GM12878 (cell line): ENCODE measurements at regions of chr6 and their contacts with region 1.

Region 1: GRCh38 chr6:42505377-42505702 is 53.6 kb upstream of the TRERF1 start:
- DNase-seq: no peak
- ATAC-seq: peak; percentile 36
- H3K4me3 ChIP-seq: no peak overlapping the region
- H3K27ac ChIP-seq: peak overlapping the region; percentile 54
- H3K4me1 ChIP-seq: peaks cover 52% of the 10 kb centered on the region
- H3K27me3 ChIP-seq: no peaks in the 10 kb centered on the region
- CTCF ChIP-seq: no peak
- EP300 ChIP-seq: no peak
- POLR2A ChIP-seq: no peak
- RAD21 ChIP-seq: no peak

Region 2: GRCh38 chr6:42224222-42224989 is 280.9 kb before region 1 on chr6:
- CTCF ChIA-PET with region 1: no interaction called
- POLR2A ChIA-PET with region 1: interaction called, 3 read pairs
- RAD21 ChIA-PET with region 1: interaction called, 6 read pairs
- SMC1A ChIA-PET with region 1: interaction called, 3 read pairs
- in situ Hi-C with region 1: no loop called
- intact Hi-C with region 1: loop called (anchors 2 kb)
- DNase-seq: peak; percentile 94
- ATAC-seq: peak; percentile 94
- H3K4me3 ChIP-seq: no peak overlapping the region
- H3K27ac ChIP-seq: no peak overlapping the region
- H3K4me1 ChIP-seq: no peaks in the 10 kb centered on the region; the same call in 1 of the 2 replicates
- H3K27me3 ChIP-seq: no peaks in the 10 kb centered on the region
- CTCF ChIP-seq: no peak
- EP300 ChIP-seq: peak; percentile 71 to 96
- POLR2A ChIP-seq: no peak
- RAD21 ChIP-seq: no peak

Region 3: GRCh38 chr6:42367353-42368011 is 137.9 kb before region 1 on chr6:
- CTCF ChIA-PET with region 1: interaction called, 3 read pairs
- POLR2A ChIA-PET with region 1: interaction called, 3 read pairs
- RAD21 ChIA-PET with region 1: interaction called, 22 read pairs
- SMC1A ChIA-PET with region 1: interaction called, 17 read pairs
- in situ Hi-C with region 1: no loop called
- intact Hi-C with region 1: no loop called
- DNase-seq: peak; percentile 59
- ATAC-seq: peak; percentile 92
- H3K4me3 ChIP-seq: peak overlapping the region; percentile 35; the same call in 1 of the 2 replicates
- H3K27ac ChIP-seq: peak overlapping the region; percentile 82
- H3K4me1 ChIP-seq: peaks cover 58% of the 10 kb centered on the region
- H3K27me3 ChIP-seq: no peaks in the 10 kb centered on the region
- CTCF ChIP-seq: no peak
- EP300 ChIP-seq: no peak
- POLR2A ChIP-seq: peak; percentile 52
- RAD21 ChIP-seq: no peak

Region 4: DNA sequence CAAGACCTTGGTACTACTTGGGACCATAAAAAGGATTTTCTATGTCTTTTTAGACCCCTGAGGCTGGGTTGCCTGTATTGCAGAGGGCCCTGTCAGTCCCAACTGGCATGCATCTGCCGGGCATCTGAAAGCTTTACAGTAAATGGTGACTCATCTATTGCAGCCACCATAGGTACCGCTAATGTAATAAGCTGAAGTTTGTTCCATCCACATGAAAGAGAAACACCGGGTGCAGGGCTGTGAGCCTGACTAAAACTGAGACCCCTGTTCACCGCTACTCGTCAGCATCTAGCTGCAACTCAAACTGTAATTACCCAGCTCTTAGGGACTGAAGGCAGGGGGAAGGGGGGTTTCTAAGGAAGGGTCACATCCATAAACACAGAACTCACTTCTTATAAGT is 103.2 kb before region 1 on chr6:
- CTCF ChIA-PET with region 1: no interaction called
- POLR2A ChIA-PET with region 1: interaction called, 5 read pairs
- RAD21 ChIA-PET with region 1: interaction called, 4 read pairs
- SMC1A ChIA-PET with region 1: interaction called, 7 read pairs
- in situ Hi-C with region 1: no loop called
- intact Hi-C with region 1: loop called (anchors 5 kb)
- DNase-seq: peak; percentile 74
- ATAC-seq: peak; percentile 99
- H3K4me3 ChIP-seq: no peak overlapping the region
- H3K27ac ChIP-seq: no peak overlapping the region
- H3K4me1 ChIP-seq: peaks cover 12% of the 10 kb centered on the region
- H3K27me3 ChIP-seq: no peaks in the 10 kb centered on the region
- CTCF ChIP-seq: no peak
- EP300 ChIP-seq: peak; percentile 91 to 93
- POLR2A ChIP-seq: no peak
- RAD21 ChIP-seq: peak; percentile 28; the same call in 1 of the 2 replicates

Region 5: GRCh38 chr6:42428326-42429041 is 76.9 kb before region 1 on chr6:
- CTCF ChIA-PET with region 1: interaction called, 5 read pairs
- POLR2A ChIA-PET with region 1: interaction called, 3 read pairs
- RAD21 ChIA-PET with region 1: interaction called, 12 read pairs
- SMC1A ChIA-PET with region 1: interaction called, 9 read pairs
- in situ Hi-C with region 1: no loop called
- intact Hi-C with region 1: no loop called
- DNase-seq: no peak
- ATAC-seq: peak; percentile 88
- H3K4me3 ChIP-seq: no peak overlapping the region
- H3K27ac ChIP-seq: peak overlapping the region; percentile 71
- H3K4me1 ChIP-seq: peaks cover 55% of the 10 kb centered on the region
- H3K27me3 ChIP-seq: no peaks in the 10 kb centered on the region
- CTCF ChIP-seq: no peak
- EP300 ChIP-seq: no peak
- POLR2A ChIP-seq: no peak
- RAD21 ChIP-seq: no peak; the same call in 1 of the 2 replicates

Region 6: DNA sequence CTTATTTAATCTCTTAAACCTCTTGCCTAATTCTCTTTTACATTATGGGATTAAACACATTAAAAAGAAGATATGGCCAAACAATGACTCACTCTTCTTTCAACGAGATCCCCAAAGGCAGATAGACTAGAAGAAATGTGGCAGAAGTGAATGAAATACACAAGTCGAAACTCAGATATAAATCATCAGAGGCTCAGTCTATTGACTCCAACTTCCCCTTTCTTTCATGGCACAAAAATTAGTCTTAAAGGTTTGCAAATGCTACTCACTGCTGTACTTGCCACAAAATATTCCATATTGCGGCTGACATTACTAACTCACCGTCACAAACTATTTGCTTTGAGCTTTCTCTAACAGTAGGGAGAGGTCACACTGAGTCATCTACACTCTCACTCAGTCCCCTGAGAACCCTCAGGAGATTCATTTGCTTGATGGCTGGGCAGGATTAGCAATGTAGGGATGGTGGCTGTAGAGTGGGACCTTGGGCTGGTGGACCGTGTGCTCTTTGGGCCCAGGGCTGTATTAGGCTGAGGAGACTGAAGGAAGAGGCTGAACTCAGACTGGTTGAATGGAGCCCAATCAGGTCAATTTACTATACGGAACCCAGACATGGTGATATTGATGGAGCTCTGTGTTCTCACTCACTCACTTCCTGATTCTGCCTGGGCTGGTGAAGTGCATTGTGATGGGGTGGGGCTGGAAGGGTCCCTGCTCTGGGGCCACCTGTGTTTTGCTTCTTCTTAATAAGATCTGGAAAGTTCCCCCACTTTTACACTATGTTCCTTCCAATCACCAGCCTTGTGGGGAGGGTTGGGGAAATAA is 15.7 kb after region 1 on chr6:
- CTCF ChIA-PET with region 1: interaction called, 49 read pairs
- POLR2A ChIA-PET with region 1: interaction called, 32 read pairs
- RAD21 ChIA-PET with region 1: interaction called, 55 read pairs
- SMC1A ChIA-PET with region 1: interaction called, 48 read pairs
- in situ Hi-C with region 1: no loop called
- intact Hi-C with region 1: loop called (anchors 2 kb)
- DNase-seq: peak; percentile 74
- ATAC-seq: peak; percentile 91
- H3K4me3 ChIP-seq: no peak overlapping the region
- H3K27ac ChIP-seq: peak overlapping the region; percentile 72
- H3K4me1 ChIP-seq: peaks cover 15% of the 10 kb centered on the region
- H3K27me3 ChIP-seq: no peaks in the 10 kb centered on the region
- CTCF ChIP-seq: no peak
- EP300 ChIP-seq: peak in 1 of 2 experiments; percentile 34; a peak in 1 of 4 replicates
- POLR2A ChIP-seq: 0 out of 2 replicates have a peak, but pooled peaks have one; percentile 37
- RAD21 ChIP-seq: no peak

Region 7: GRCh38 chr6:42563697-42564505 is 58.6 kb after region 1 on chr6 and contains the start of gene UBR2:
- CTCF ChIA-PET with region 1: interaction called, 3 read pairs
- POLR2A ChIA-PET with region 1: interaction called, 3 read pairs
- RAD21 ChIA-PET with region 1: interaction called, 6 read pairs
- SMC1A ChIA-PET with region 1: interaction called, 12 read pairs
- in situ Hi-C with region 1: no loop called
- intact Hi-C with region 1: no loop called
- DNase-seq: peak; percentile 91
- ATAC-seq: peak; percentile 96
- H3K4me3 ChIP-seq: peak within 1 kb of the TSS; percentile 90
- H3K27ac ChIP-seq: peak within 1 kb of the TSS; percentile 93
- H3K4me1 ChIP-seq: no peaks in the 10 kb centered on the region; the same call in 1 of the 2 replicates
- H3K27me3 ChIP-seq: no peaks in the 10 kb centered on the region
- CTCF ChIP-seq: peak; percentile 32 to 40 (median 39); a peak in 5 of 6 replicates
- EP300 ChIP-seq: no peak
- POLR2A ChIP-seq: peak; percentile 97
- RAD21 ChIP-seq: no peak
- polyA plus RNA-seq, gene UBR2: 2.3 to 5.9 TPM